ENCODE measurements at regions of chr11 and their contacts with region 1.

Region 1: GRCh38 chr11:14907411-14908213 is 15.6 kb upstream of the CYP2R1 start:
- DNase-seq: peak; percentile 70
- H3K4me3 Mint-ChIP-seq: peak overlapping the region; percentile 43
- H3K27ac Mint-ChIP-seq: no peak overlapping the region
- H3K4me1 Mint-ChIP-seq: peaks cover 16% of the 10 kb centered on the region
- H3K27me3 Mint-ChIP-seq: peaks cover 22% of the 10 kb centered on the region
- CTCF ChIP-seq: peak; percentile 90

Region 2: GRCh38 chr11:14101388-14101787 is 806.2 kb before region 1 on chr11:
- CTCF ChIA-PET with region 1: no interaction called
- POLR2A ChIA-PET with region 1: no interaction called
- intact Hi-C with region 1: no loop called
- DNase-seq: no peak
- H3K4me3 Mint-ChIP-seq: no peak overlapping the region
- H3K27ac Mint-ChIP-seq: no peak overlapping the region
- H3K4me1 Mint-ChIP-seq: no peaks in the 10 kb centered on the region
- H3K27me3 Mint-ChIP-seq: peaks cover 14% of the 10 kb centered on the region
- CTCF ChIP-seq: no peak

Region 3: GRCh38 chr11:14386895-14387480 is 520.6 kb before region 1 on chr11:
- CTCF ChIA-PET with region 1: no interaction called
- POLR2A ChIA-PET with region 1: no interaction called
- intact Hi-C with region 1: no loop called
- DNase-seq: no peak
- H3K4me3 Mint-ChIP-seq: no peak overlapping the region
- H3K27ac Mint-ChIP-seq: no peak overlapping the region
- H3K4me1 Mint-ChIP-seq: no peaks in the 10 kb centered on the region
- H3K27me3 Mint-ChIP-seq: no peaks in the 10 kb centered on the region
- CTCF ChIP-seq: no peak

Region 4: GRCh38 chr11:14789879-14790484 is 117.6 kb before region 1 on chr11:
- CTCF ChIA-PET with region 1: interaction called, 196 read pairs
- POLR2A ChIA-PET with region 1: interaction called, 10 read pairs
- intact Hi-C with region 1: loop called (anchors 1 kb)
- DNase-seq: peak; percentile 21
- H3K4me3 Mint-ChIP-seq: no peak overlapping the region
- H3K27ac Mint-ChIP-seq: no peak overlapping the region
- H3K4me1 Mint-ChIP-seq: no peaks in the 10 kb centered on the region
- H3K27me3 Mint-ChIP-seq: peaks cover 27% of the 10 kb centered on the region
- CTCF ChIP-seq: peak; percentile 45

Region 5: DNA sequence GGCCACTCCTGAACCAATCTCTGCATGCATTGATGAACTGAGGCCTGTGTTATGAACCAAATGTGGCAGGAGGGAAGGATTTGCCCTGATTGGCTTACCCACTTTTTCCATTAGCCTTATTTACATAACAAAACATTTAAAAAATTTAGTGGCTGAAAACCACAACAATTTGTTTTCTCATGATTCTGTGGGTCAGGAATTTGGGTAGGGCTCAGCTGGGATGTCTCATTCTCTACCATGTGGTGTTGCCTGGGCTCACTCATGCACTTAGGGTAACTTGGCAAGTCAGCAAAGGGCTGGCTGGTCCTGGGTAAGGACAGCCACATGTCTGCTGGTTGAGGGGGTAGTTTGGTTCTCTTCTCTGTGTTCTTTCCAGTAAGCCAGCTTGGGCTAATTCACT is 19.5 kb after region 1 on chr11:
- CTCF ChIA-PET with region 1: interaction called, 57 read pairs
- POLR2A ChIA-PET with region 1: no interaction called
- intact Hi-C with region 1: no loop called
- DNase-seq: no peak
- H3K4me3 Mint-ChIP-seq: no peak overlapping the region
- H3K27ac Mint-ChIP-seq: no peak overlapping the region
- H3K4me1 Mint-ChIP-seq: peaks cover 14% of the 10 kb centered on the region
- H3K27me3 Mint-ChIP-seq: peaks cover 7% of the 10 kb centered on the region
- CTCF ChIP-seq: no peak

Region 6: DNA sequence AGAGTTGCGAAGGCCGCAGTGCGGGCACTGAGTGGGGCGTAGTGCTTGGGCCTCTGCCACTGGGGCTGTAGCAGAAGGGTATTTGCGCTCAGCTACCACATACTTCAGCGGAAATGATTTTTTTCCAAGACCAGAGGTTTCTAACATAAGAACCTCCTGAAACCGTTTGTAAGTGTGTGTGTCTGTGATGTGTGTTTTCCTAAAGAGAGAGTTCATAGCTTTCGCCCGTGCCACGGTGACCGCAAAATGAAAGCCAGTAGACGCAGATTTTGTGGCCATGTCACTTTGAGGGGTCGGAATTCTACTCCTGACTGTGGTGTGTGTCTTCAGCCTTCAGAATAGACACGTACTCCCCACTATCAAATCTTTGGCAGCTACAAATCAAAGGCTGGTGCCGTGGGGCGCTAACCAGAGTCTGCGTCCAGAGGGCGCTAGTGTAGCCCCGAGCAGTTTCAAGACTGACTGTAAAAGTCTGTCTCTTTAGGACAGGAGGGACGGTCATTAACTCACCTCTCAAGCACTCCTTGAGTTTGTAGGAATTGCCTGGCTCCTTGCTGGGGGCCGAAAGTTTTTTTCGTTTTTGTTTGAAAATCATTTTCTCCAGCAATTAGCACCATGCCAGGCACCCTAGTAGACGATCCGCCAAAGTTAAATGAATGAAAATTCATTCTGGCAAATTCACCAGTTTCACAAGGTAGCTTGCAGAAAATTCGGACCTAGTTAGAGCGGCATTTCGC is 67.1 kb after region 1 on chr11:
- CTCF ChIA-PET with region 1: interaction called, 20 read pairs
- POLR2A ChIA-PET with region 1: interaction called, 4 read pairs
- intact Hi-C with region 1: no loop called
- DNase-seq: peak; percentile 49
- H3K4me3 Mint-ChIP-seq: no peak overlapping the region
- H3K27ac Mint-ChIP-seq: no peak overlapping the region
- H3K4me1 Mint-ChIP-seq: no peaks in the 10 kb centered on the region
- H3K27me3 Mint-ChIP-seq: peaks cover 22% of the 10 kb centered on the region
- CTCF ChIP-seq: peak; percentile 52

Region 7: GRCh38 chr11:15059132-15059915 is 151.7 kb after region 1 on chr11:
- CTCF ChIA-PET with region 1: interaction called, 12 read pairs
- POLR2A ChIA-PET with region 1: no interaction called
- intact Hi-C with region 1: no loop called
- DNase-seq: peak; percentile 14
- H3K4me3 Mint-ChIP-seq: no peak overlapping the region
- H3K27ac Mint-ChIP-seq: no peak overlapping the region
- H3K4me1 Mint-ChIP-seq: peaks cover 7% of the 10 kb centered on the region
- H3K27me3 Mint-ChIP-seq: no peaks in the 10 kb centered on the region
- CTCF ChIP-seq: no peak

Region 8: GRCh38 chr11:15107730-15108515 is 200.3 kb after region 1 on chr11:
- CTCF ChIA-PET with region 1: interaction called, 44 read pairs
- POLR2A ChIA-PET with region 1: no interaction called
- intact Hi-C with region 1: no loop called
- DNase-seq: peak; percentile 62
- H3K4me3 Mint-ChIP-seq: no peak overlapping the region
- H3K27ac Mint-ChIP-seq: peak overlapping the region; percentile 74
- H3K4me1 Mint-ChIP-seq: peaks cover 31% of the 10 kb centered on the region
- H3K27me3 Mint-ChIP-seq: no peaks in the 10 kb centered on the region
- CTCF ChIP-seq: no peak

Region 9: DNA sequence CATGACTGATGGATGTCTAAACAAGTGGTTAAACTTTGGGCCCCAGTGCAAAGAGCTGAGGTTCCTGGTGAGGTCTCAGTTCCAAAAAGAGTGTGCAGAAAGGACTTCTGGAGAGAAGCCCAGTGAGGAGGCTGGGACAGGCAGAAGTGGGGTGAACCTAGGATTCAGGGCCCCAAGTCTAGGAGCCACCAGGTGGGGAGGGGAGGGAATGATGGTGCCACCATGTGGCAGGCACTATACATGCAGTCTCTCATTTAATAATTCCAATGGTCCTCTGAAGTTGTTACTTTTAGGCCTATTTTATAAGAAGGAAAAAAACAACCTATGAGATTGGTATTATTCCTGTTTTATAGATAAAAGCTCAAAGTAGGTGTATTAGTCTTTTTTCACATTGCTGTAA is 309.1 kb after region 1 on chr11:
- CTCF ChIA-PET with region 1: interaction called, 29 read pairs
- POLR2A ChIA-PET with region 1: no interaction called
- intact Hi-C with region 1: no loop called
- DNase-seq: peak; percentile 25
- H3K4me3 Mint-ChIP-seq: no peak overlapping the region
- H3K27ac Mint-ChIP-seq: no peak overlapping the region
- H3K4me1 Mint-ChIP-seq: no peaks in the 10 kb centered on the region
- H3K27me3 Mint-ChIP-seq: no peaks in the 10 kb centered on the region
- CTCF ChIP-seq: peak; percentile 23

Measured in MCF 10A (cell line).